Naive thymus-derived CD4-positive, alpha-beta T cell (primary cell): ENCODE measurements at regions of chr1 and their contacts with region 1.

Region 1: DNA sequence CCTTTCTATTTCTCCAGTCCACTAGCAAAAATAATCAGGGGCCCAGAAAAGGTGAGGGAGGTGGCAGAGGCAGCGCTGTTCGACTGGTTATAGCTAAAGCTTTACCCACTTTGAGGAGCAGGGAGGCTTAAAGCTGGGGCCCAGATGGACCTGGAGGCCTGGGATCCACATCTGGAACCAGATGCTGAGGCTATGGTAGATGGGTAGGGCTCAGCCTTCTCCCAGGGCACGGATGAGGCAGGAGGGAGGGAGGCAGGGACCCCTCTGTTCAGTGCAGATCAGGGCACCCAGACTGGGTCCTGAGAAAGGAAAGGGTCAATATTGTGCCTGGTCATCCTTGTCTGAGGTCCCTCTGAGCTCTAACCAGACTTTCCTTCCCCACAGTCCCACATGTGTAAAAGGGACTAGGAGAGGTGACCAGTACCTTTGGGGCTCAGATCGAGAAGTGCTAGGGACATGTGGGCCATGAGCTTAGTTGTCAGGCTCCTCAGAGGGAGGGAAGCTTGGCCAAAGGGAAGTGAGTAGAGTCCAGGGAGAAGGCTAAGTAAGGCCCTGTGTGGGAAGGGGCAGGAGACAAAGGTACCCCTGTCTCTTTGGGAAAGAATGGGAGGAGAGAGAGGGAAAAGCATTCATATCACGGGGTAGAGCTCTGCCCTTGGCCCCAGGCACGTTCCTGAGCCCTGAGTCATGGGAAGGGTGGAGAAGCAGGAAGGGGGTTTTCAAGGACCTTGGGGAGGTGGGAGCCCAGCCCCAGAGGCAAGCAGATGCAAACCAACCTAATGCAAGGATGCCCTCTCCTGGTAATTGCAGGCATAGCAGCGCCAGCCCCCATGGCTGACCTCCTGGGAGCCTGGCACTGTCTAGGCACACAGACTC is 15.4 kb downstream of the LMNA start:
- DNase-seq: peak; percentile 55 to 83 (median 65)
- ATAC-seq: peak; percentile 40
- H3K4me3 ChIP-seq: no peak overlapping the region
- H3K4me3 Mint-ChIP-seq: peak overlapping the region in 4 of 10 donors; percentile 21 to 49 (median 26)
- H3K27ac ChIP-seq: no peak overlapping the region
- H3K27ac Mint-ChIP-seq: peak overlapping the region in 6 of 9 donors; percentile 41 to 87 (median 67)
- H3K4me1 ChIP-seq: peaks cover 34 to 42% of the 10 kb centered on the region in 2 donors
- H3K4me1 Mint-ChIP-seq: peaks cover 24 to 52% (median 48%) of the 10 kb centered on the region in 7 donors
- H3K27me3 ChIP-seq: no peaks in the 10 kb centered on the region
- H3K27me3 Mint-ChIP-seq: peaks cover 0 to 25% (median 0%) of the 10 kb centered on the region in 5 donors

Region 2: DNA sequence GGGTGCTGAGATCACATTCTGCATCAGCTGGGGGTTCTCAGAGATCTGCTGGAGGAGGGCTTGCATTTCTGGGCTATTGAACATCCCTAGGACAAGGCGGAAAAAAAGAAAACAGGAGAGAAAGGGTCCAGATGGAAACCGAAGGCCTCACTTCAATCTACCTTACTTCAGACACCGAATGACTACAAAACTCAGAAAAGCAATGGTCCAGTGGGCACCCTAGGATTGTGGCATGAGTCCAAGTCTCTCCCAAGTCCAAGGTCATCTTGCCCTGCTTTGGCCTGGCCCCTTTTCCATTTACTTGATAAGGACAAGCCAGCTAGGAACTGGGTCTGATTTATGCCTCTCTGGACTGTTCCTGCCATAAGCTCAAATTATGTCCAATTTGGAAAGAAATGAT is 87.1 kb before region 1 on chr1:
- CTCF ChIA-PET with region 1: no interaction called
- POLR2A ChIA-PET with region 1: no interaction called
- intact Hi-C with region 1: no loop called
- DNase-seq: no peak
- ATAC-seq: no peak
- H3K4me3 ChIP-seq: no peak overlapping the region
- H3K4me3 Mint-ChIP-seq: no peak overlapping the region
- H3K27ac ChIP-seq: no peak overlapping the region
- H3K27ac Mint-ChIP-seq: peak overlapping the region in 1 of 9 donors; percentile 25
- H3K4me1 ChIP-seq: no peaks in the 10 kb centered on the region
- H3K4me1 Mint-ChIP-seq: peaks cover 0 to 12% (median 0%) of the 10 kb centered on the region in 7 donors
- H3K27me3 ChIP-seq: no peaks in the 10 kb centered on the region
- H3K27me3 Mint-ChIP-seq: no peaks in the 10 kb centered on the region

Region 3: DNA sequence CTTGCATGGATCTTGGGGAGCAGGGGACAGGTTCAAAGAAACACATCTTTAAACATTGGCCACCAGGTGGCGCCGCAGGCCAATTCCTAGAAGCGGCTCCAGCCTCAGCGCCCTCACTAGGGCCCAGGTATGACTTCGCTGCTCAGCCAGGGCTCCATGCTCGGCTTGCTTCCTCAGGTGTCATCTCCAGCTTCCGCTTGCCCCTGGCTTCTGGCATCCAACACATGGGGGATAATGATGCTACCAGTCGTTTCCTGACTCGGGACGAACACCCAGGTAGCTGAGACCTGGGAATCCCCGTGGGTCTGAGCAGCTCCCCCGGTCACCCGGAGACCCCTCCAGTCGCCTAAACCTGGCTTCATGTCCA is 39.1 kb before region 1 on chr1:
- CTCF ChIA-PET with region 1: interaction called, 340 read pairs
- POLR2A ChIA-PET with region 1: interaction called, 49 read pairs
- intact Hi-C with region 1: loop called (anchors 1 kb)
- DNase-seq: peak; percentile 69 to 86 (median 82)
- ATAC-seq: peak; percentile 97
- H3K4me3 ChIP-seq: no peak overlapping the region
- H3K4me3 Mint-ChIP-seq: no peak overlapping the region
- H3K27ac ChIP-seq: no peak overlapping the region
- H3K27ac Mint-ChIP-seq: peak overlapping the region in 5 of 9 donors; percentile 3 to 76 (median 40)
- H3K4me1 ChIP-seq: peaks cover 2 to 4% of the 10 kb centered on the region in 2 donors
- H3K4me1 Mint-ChIP-seq: peaks cover 5 to 13% (median 9%) of the 10 kb centered on the region in 7 donors
- H3K27me3 ChIP-seq: no peaks in the 10 kb centered on the region
- H3K27me3 Mint-ChIP-seq: peaks cover 5 to 57% (median 19%) of the 10 kb centered on the region in 5 donors

Region 4: DNA sequence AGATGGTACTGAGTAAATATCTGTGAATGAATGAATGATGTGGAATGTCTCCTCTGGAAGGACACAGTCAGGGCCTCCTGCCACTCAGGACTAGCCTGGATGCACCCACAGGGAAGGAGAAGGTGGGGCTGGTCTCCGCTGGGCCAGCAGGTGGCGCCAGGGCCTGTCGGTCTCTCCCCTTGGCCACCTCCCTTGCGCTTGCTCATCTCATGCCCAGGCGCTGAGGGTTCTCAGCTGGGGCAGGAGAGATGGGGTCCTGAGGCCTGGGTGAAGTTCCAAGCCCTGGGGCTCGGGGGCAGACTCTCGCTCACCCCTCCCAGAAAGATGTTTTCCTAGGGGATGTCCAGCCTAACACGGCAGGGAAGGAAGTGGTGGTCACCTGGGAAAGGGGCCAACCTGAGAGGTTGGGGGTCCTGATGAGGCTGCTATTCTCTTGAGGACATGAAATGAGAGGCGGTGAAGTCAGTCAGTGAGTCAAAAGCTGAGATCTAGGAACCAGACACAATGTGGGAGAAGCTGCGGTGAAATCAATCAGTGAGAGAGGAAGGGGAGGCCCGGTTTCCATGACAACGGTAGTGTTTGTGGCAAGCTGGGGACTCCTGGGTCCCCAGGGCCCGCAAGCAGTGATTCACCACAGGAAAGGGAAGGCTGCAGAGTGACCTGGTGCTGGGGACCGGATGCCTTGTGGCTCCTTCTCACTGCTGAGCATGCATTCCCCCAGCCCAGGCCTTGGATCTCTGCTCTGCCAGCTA is 33.1 kb before region 1 on chr1:
- CTCF ChIA-PET with region 1: interaction called, 340 read pairs
- POLR2A ChIA-PET with region 1: interaction called, 49 read pairs
- intact Hi-C with region 1: loop called (anchors 1 kb)
- DNase-seq: peak; percentile 77 to 91 (median 80)
- ATAC-seq: peak; percentile 87
- H3K4me3 ChIP-seq: peak overlapping the region; percentile 10
- H3K4me3 Mint-ChIP-seq: peak overlapping the region; percentile 31 to 83 (median 72)
- H3K27ac ChIP-seq: peak overlapping the region; percentile 63
- H3K27ac Mint-ChIP-seq: peak overlapping the region; percentile 76 to 95 (median 91)
- H3K4me1 ChIP-seq: peaks cover 18 to 22% of the 10 kb centered on the region in 2 donors
- H3K4me1 Mint-ChIP-seq: peaks cover 18 to 45% (median 26%) of the 10 kb centered on the region in 7 donors
- H3K27me3 ChIP-seq: no peaks in the 10 kb centered on the region
- H3K27me3 Mint-ChIP-seq: peaks cover 0 to 52% (median 0%) of the 10 kb centered on the region in 5 donors

Region 5: GRCh38 chr1:156106624-156107488 is 23.1 kb before region 1 on chr1:
- CTCF ChIA-PET with region 1: interaction called, 340 read pairs
- POLR2A ChIA-PET with region 1: interaction called, 4 read pairs
- intact Hi-C with region 1: loop called (anchors 1 kb)
- DNase-seq: peak in 1 of 9 donors; percentile 52
- ATAC-seq: no peak
- H3K4me3 ChIP-seq: peak overlapping the region; percentile 39
- H3K4me3 Mint-ChIP-seq: peak overlapping the region; percentile 39 to 85 (median 74)
- H3K27ac ChIP-seq: peak overlapping the region; percentile 73
- H3K27ac Mint-ChIP-seq: peak overlapping the region; percentile 88 to 99 (median 96)
- H3K4me1 ChIP-seq: peaks cover 12 to 38% of the 10 kb centered on the region in 2 donors
- H3K4me1 Mint-ChIP-seq: peaks cover 12 to 45% (median 25%) of the 10 kb centered on the region in 7 donors
- H3K27me3 ChIP-seq: peaks cover 0 to 2% of the 10 kb centered on the region in 2 donors
- H3K27me3 Mint-ChIP-seq: peaks cover 0 to 54% (median 0%) of the 10 kb centered on the region in 5 donors

Region 6: DNA sequence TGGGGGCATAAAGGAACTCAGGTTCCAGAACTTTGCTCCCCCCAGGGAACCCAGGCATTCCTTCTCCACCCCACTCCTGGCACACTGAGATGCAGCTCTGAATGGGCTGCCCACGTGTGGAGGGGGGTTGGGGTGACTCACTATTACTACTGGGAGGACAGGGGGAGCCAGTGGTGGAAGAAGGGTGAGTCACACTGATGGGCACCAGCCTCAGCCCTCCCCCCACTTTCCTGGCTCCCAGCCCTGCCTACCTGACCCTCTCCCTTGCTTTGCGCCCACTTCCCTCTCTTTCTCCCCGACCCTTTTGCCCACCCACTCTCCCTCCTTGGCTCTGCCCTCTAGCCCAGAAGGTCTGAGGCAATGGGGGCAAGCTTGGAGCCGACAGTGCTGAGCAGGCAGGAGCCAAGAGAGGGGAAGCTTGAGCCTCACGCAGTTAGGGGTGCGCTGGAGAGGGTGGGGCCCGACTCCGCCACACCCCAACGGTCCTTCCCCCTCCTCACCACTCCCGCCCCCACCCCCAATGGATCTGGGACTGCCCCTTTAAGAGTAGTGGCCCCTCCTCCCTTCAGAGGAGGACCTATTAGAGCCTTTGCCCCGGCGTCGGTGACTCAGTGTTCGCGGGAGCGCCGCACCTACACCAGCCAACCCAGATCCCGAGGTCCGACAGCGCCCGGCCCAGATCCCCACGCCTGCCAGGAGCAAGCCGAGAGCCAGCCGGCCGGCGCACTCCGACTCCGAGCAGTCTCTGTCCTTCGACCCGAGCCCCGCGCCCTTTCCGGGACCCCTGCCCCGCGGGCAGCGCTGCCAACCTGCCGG is 15.6 kb before region 1 on chr1 and contains the start of gene LMNA:
- CTCF ChIA-PET with region 1: interaction called, 18 read pairs
- POLR2A ChIA-PET with region 1: interaction called, 3 read pairs
- intact Hi-C with region 1: loop called in 1 of 2 experiments (anchors 1 kb)
- DNase-seq: peak in 3 of 9 donors; percentile 51 to 75 (median 62)
- ATAC-seq: peak; percentile 86
- H3K4me3 ChIP-seq: peak within 1 kb of the TSS; percentile 70
- H3K4me3 Mint-ChIP-seq: peak within 1 kb of the TSS; percentile 79 to 91 (median 86)
- H3K27ac ChIP-seq: peak within 1 kb of the TSS; percentile 9
- H3K27ac Mint-ChIP-seq: peak within 1 kb of the TSS in 7 of 9 donors; percentile 2 to 92 (median 71)
- H3K4me1 ChIP-seq: peaks cover 8 to 14% of the 10 kb centered on the region in 2 donors
- H3K4me1 Mint-ChIP-seq: peaks cover 8 to 31% (median 20%) of the 10 kb centered on the region in 7 donors
- H3K27me3 ChIP-seq: peaks cover 0 to 14% of the 10 kb centered on the region in 2 donors
- H3K27me3 Mint-ChIP-seq: peaks cover 29 to 63% (median 37%) of the 10 kb centered on the region in 5 donors
- total RNA-seq, gene LMNA: 5.5 to 470 (median 18.0) TPM

Region 7: DNA sequence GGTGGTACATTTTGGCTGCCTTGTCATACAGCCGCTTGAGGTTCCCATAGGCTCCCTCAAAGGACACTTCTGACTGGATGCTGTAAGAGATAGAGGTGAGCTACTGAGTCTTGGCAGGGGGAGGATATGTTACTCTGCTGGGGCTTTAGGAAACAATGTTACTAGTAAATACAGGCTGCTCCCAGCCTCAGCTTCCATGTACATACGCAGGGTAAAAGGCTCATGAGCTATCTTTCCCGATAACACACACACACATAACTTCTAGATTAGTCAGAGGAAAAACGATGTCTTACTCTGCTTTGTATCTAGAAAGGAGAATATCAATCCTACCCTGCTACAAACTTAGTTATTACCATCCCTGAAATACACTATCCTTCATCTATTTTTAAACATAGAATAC is 138.4 kb after region 1 on chr1:
- CTCF ChIA-PET with region 1: no interaction called
- POLR2A ChIA-PET with region 1: no interaction called
- intact Hi-C with region 1: no loop called
- DNase-seq: no peak
- ATAC-seq: no peak
- H3K4me3 ChIP-seq: no peak overlapping the region
- H3K4me3 Mint-ChIP-seq: no peak overlapping the region
- H3K27ac ChIP-seq: no peak overlapping the region
- H3K27ac Mint-ChIP-seq: no peak overlapping the region
- H3K4me1 ChIP-seq: no peaks in the 10 kb centered on the region
- H3K4me1 Mint-ChIP-seq: peaks cover 0 to 9% (median 0%) of the 10 kb centered on the region in 7 donors
- H3K27me3 ChIP-seq: no peaks in the 10 kb centered on the region
- H3K27me3 Mint-ChIP-seq: no peaks in the 10 kb centered on the region